ENCODE measurements at regions of chr12 and their contacts with region 1.

Region 1: GRCh38 chr12:130761537-130762318 is 45.6 kb upstream of the RIMBP2 start:
- DNase-seq: peak in 1 of 2 experiments; percentile 50
- H3K4me3 ChIP-seq: no peak overlapping the region
- H3K27ac ChIP-seq: no peak overlapping the region
- H3K4me1 ChIP-seq: no peaks in the 10 kb centered on the region
- H3K27me3 ChIP-seq: peaks cover 50% of the 10 kb centered on the region
- CTCF ChIP-seq: peak; percentile 54

Region 2: GRCh38 chr12:130440411-130441080 is 321.2 kb before region 1 on chr12:
- CTCF ChIA-PET with region 1: no interaction called
- POLR2A ChIA-PET with region 1: no interaction called
- intact Hi-C with region 1: no loop called
- DNase-seq: no peak
- H3K4me3 ChIP-seq: no peak overlapping the region
- H3K27ac ChIP-seq: no peak overlapping the region
- H3K4me1 ChIP-seq: no peaks in the 10 kb centered on the region
- H3K27me3 ChIP-seq: peaks cover 34% of the 10 kb centered on the region
- CTCF ChIP-seq: no peak

Region 3: DNA sequence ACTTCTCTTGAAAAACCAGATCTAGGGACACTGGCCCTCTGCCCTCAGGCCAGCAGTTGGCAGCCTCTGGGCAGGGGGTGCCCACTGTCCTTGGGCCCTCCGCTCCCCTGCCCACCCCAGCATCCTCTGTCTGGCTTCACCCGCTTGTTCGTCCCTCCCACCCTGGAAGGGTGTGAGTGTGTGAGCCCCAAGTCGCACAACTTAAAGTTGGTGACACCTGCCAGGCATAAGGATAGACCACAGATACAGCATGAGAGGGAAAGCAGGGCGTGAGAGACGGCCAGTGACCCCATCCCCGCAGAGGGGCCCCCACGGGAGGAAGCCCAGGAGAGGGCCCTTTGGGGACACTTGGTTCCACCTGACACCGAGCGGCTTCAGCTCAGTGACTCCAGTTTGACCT is 22.2 kb before region 1 on chr12:
- CTCF ChIA-PET with region 1: no interaction called
- POLR2A ChIA-PET with region 1: no interaction called
- intact Hi-C with region 1: no loop called
- DNase-seq: no peak
- H3K4me3 ChIP-seq: no peak overlapping the region
- H3K27ac ChIP-seq: no peak overlapping the region
- H3K4me1 ChIP-seq: no peaks in the 10 kb centered on the region
- H3K27me3 ChIP-seq: peaks cover 89% of the 10 kb centered on the region
- CTCF ChIP-seq: no peak

Region 4: GRCh38 chr12:130818635-130819576 is 57.2 kb after region 1 on chr12:
- CTCF ChIA-PET with region 1: no interaction called
- POLR2A ChIA-PET with region 1: no interaction called
- intact Hi-C with region 1: loop called (anchors 1 kb)
- DNase-seq: peak in 1 of 2 experiments; percentile 77
- H3K4me3 ChIP-seq: peak overlapping the region; percentile 58
- H3K27ac ChIP-seq: no peak overlapping the region
- H3K4me1 ChIP-seq: no peaks in the 10 kb centered on the region
- H3K27me3 ChIP-seq: no peaks in the 10 kb centered on the region
- CTCF ChIP-seq: peak; percentile 75

Region 5: DNA sequence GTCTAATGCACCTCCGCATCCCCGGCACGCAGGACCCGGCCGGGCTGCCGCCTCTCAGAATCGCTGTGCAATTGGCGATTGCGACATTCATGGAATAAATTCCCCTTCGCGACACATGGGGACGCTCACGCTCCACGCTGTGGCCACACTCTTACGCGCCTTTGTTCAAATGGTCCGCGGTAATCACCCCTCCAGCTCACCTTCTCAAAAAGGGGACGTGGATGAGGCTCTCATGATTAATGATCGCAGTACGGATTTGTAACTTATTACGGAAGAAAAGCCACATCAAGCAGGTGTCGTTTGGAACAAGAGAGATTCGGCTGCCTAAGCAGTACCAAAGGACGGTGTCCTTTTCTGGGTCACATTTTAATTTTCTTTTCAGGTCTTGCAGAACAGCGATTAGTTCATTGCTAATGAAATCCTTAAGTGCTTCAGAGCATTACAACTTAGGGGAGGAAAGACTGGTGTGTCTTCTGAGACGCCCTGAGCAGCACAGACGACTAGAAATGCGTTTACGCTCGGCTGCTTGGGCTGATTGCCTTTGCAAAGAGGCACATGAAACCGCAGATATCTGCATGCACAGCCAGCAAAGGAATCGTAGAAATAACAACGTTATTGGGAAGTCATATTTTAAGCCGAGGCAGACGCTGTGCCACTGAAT is 154.7 kb after region 1 on chr12:
- CTCF ChIA-PET with region 1: no interaction called
- POLR2A ChIA-PET with region 1: no interaction called
- intact Hi-C with region 1: no loop called
- DNase-seq: peak in 1 of 2 experiments; percentile 11
- H3K4me3 ChIP-seq: no peak overlapping the region
- H3K27ac ChIP-seq: no peak overlapping the region
- H3K4me1 ChIP-seq: no peaks in the 10 kb centered on the region
- H3K27me3 ChIP-seq: peaks cover 73% of the 10 kb centered on the region
- CTCF ChIP-seq: peak; percentile 74